Activated CD4-positive, alpha-beta T cell treated with anti-CD3 and anti-CD28 coated beads for 36 hours (primary cell): ENCODE measurements at regions of chr7 and their contacts with region 1.

Region 1: GRCh38 chr7:4883374-4884144 is at the start of gene RADIL:
- DNase-seq: peak; percentile 98
- ATAC-seq: peak; percentile 100
- H3K4me3 Mint-ChIP-seq: peak within 1 kb of the TSS; percentile 64
- H3K27ac Mint-ChIP-seq: no peak within 1 kb of the TSS
- H3K4me1 Mint-ChIP-seq: peaks cover 10% of the 10 kb centered on the region
- H3K27me3 Mint-ChIP-seq: peaks cover 20% of the 10 kb centered on the region
- total RNA-seq, gene RADIL: 0.42 to 0.69 TPM

Region 2: GRCh38 chr7:4641667-4642467 is 241.7 kb before region 1 on chr7:
- CTCF ChIA-PET with region 1: interaction called, 5 read pairs
- POLR2A ChIA-PET with region 1: no interaction called
- intact Hi-C with region 1: loop called in 1 of 2 experiments (anchors 1 kb)
- DNase-seq: peak; percentile 97
- ATAC-seq: peak; percentile 89
- H3K4me3 Mint-ChIP-seq: peak overlapping the region; percentile 91
- H3K27ac Mint-ChIP-seq: peak overlapping the region; percentile 95
- H3K4me1 Mint-ChIP-seq: peaks cover 9% of the 10 kb centered on the region
- H3K27me3 Mint-ChIP-seq: no peaks in the 10 kb centered on the region

Region 3: DNA sequence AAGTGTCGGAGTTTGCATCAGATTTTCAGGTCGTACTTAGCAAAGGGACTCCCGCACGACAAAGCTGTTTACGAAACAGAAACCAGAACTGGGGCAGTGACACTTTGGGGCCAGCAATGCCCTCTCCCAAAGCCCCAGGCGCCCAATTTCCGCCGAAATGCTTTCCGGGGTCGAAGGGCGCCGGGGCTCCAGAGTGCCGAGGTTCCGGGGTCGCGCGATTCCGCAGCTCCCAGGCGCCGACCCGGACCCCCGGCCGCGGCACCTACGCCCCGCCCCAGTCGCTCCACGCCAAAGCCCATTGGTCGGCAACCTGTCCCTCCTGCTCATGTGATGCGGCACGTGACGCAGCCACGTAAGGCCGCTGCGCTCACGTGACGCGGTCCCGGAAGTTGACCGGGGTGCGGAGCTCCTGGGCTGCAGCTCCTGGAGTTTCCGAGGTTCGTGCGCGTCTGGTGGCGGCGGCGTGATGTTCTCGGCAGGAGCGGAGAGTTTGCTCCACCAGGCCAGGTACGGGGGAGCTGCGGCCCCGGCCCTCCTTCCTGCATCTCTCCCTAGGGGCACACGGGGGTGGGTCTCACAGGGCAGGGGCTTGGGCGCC is 108.2 kb before region 1 on chr7 and contains the start of gene AP5Z1:
- CTCF ChIA-PET with region 1: interaction called, 4 read pairs
- POLR2A ChIA-PET with region 1: no interaction called
- intact Hi-C with region 1: loop called in 1 of 2 experiments (anchors 1 kb)
- DNase-seq: peak; percentile 97
- ATAC-seq: peak; percentile 94
- H3K4me3 Mint-ChIP-seq: peak within 1 kb of the TSS; percentile 99
- H3K27ac Mint-ChIP-seq: peak within 1 kb of the TSS; percentile 94
- H3K4me1 Mint-ChIP-seq: peaks cover 43% of the 10 kb centered on the region
- H3K27me3 Mint-ChIP-seq: no peaks in the 10 kb centered on the region
- total RNA-seq, gene AP5Z1: 21.0 to 26.4 TPM

Region 4: GRCh38 chr7:4797858-4798705 is 85.5 kb before region 1 on chr7:
- CTCF ChIA-PET with region 1: interaction called, 24 read pairs
- POLR2A ChIA-PET with region 1: no interaction called
- intact Hi-C with region 1: loop called in 1 of 2 experiments (anchors 1 kb)
- DNase-seq: peak; percentile 79
- ATAC-seq: peak; percentile 92
- H3K4me3 Mint-ChIP-seq: no peak overlapping the region
- H3K27ac Mint-ChIP-seq: no peak overlapping the region
- H3K4me1 Mint-ChIP-seq: peaks cover 4% of the 10 kb centered on the region
- H3K27me3 Mint-ChIP-seq: no peaks in the 10 kb centered on the region

Region 5: GRCh38 chr7:4849369-4849768 is 34.2 kb before region 1 on chr7:
- CTCF ChIA-PET with region 1: interaction called, 11 read pairs
- POLR2A ChIA-PET with region 1: no interaction called
- intact Hi-C with region 1: loop called in 1 of 2 experiments (anchors 1 kb)
- DNase-seq: peak; percentile 46
- ATAC-seq: peak; percentile 64
- H3K4me3 Mint-ChIP-seq: no peak overlapping the region
- H3K27ac Mint-ChIP-seq: no peak overlapping the region
- H3K4me1 Mint-ChIP-seq: peaks cover 9% of the 10 kb centered on the region
- H3K27me3 Mint-ChIP-seq: peaks cover 16% of the 10 kb centered on the region

Region 6: GRCh38 chr7:5045558-5046396 is 162.2 kb after region 1 on chr7 and contains the start of gene RBAK:
- CTCF ChIA-PET with region 1: interaction called, 4 read pairs
- POLR2A ChIA-PET with region 1: no interaction called
- intact Hi-C with region 1: loop called in 1 of 2 experiments (anchors 1 kb)
- DNase-seq: peak; percentile 94
- ATAC-seq: peak; percentile 100
- H3K4me3 Mint-ChIP-seq: peak within 1 kb of the TSS; percentile 91
- H3K27ac Mint-ChIP-seq: peak within 1 kb of the TSS; percentile 92
- H3K4me1 Mint-ChIP-seq: peaks cover 41% of the 10 kb centered on the region
- H3K27me3 Mint-ChIP-seq: no peaks in the 10 kb centered on the region
- total RNA-seq, gene RBAK: 12.4 to 12.7 TPM